B cell (primary cell): ENCODE measurements at regions of chr12 and their contacts with region 1.

Region 1: GRCh38 chr12:55885113-55885512 is 42.4 kb upstream of the MMP19 start:
- DNase-seq: no peak
- ATAC-seq: no peak
- H3K4me3 ChIP-seq: no peak overlapping the region
- H3K4me3 Mint-ChIP-seq: no peak overlapping the region
- H3K27ac ChIP-seq: no peak overlapping the region
- H3K27ac Mint-ChIP-seq: no peak overlapping the region
- H3K4me1 ChIP-seq: no peaks in the 10 kb centered on the region
- H3K4me1 Mint-ChIP-seq: peaks cover 2% of the 10 kb centered on the region
- H3K27me3 ChIP-seq: no peaks in the 10 kb centered on the region
- H3K27me3 Mint-ChIP-seq: no peaks in the 10 kb centered on the region
- CTCF ChIP-seq: no peak

Region 2: GRCh38 chr12:56718149-56718548 is 833.0 kb after region 1 on chr12:
- CTCF ChIA-PET with region 1: no interaction called
- POLR2A ChIA-PET with region 1: interaction called, 11 read pairs
- intact Hi-C with region 1: no loop called
- DNase-seq: no peak
- ATAC-seq: no peak
- H3K4me3 ChIP-seq: no peak overlapping the region
- H3K4me3 Mint-ChIP-seq: no peak overlapping the region
- H3K27ac ChIP-seq: peak overlapping the region in 1 of 2 donors; percentile 92
- H3K27ac Mint-ChIP-seq: no peak overlapping the region
- H3K4me1 ChIP-seq: peaks cover 48 to 66% of the 10 kb centered on the region in 2 donors
- H3K4me1 Mint-ChIP-seq: peaks cover 64% of the 10 kb centered on the region
- H3K27me3 ChIP-seq: no peaks in the 10 kb centered on the region
- H3K27me3 Mint-ChIP-seq: no peaks in the 10 kb centered on the region
- CTCF ChIP-seq: no peak